Cardiac septum (tissue), 1 donor: ENCODE measurements at regions of chr19 and their contacts with region 1.

Region 1: DNA sequence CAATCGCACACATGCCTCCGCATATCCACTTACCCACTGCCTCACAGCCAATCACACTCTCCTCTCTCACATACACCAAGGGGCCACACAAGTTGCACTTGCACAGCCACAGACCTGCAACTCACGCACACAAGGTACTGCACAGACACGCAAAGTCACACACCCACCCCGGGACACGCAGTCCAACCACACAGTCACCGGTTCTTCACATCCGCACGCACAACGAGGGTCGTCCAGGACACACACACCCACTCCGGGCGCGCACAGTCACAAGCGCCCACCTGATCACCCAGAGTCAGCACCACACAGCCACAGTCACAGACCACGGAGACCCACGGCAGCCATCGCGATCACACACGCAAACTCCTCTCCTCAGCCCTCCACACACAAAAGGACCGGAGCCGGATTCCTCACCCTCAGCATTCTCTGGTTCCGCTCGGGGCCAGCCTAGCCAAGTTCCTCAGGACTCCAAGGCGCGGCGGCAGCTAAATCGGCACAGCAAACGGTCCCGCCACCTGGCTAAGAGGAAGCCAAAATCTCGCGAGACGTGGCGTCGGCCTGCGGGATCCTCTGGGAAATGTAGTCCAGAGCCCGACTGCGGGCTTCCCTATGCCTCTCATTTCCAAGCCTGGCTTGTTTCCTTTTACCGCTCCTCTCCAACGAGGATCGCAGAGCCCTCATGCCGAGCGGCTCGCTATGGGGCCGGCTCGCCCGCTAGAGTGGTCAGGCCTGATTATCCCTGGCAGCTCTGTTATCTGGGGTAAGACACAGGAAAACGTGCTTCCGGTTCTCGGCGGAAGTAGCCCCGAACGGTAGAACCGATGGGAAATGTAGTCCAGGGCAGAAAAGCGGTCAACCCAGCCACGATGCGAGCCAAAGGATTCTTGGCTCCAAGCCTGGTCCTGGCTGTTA is at the start of gene ZNF850:
- DNase-seq: peak; percentile 96
- total RNA-seq, gene ZNF850: 3.3 TPM

Region 2: GRCh38 chr19:36139473-36140303 is 632.9 kb before region 1 on chr19 and contains the start of gene CAPNS1:
- intact Hi-C with region 1: loop called (anchors 10 kb)
- DNase-seq: peak; percentile 99
- total RNA-seq, gene CAPNS1: 892 TPM

Region 3: DNA sequence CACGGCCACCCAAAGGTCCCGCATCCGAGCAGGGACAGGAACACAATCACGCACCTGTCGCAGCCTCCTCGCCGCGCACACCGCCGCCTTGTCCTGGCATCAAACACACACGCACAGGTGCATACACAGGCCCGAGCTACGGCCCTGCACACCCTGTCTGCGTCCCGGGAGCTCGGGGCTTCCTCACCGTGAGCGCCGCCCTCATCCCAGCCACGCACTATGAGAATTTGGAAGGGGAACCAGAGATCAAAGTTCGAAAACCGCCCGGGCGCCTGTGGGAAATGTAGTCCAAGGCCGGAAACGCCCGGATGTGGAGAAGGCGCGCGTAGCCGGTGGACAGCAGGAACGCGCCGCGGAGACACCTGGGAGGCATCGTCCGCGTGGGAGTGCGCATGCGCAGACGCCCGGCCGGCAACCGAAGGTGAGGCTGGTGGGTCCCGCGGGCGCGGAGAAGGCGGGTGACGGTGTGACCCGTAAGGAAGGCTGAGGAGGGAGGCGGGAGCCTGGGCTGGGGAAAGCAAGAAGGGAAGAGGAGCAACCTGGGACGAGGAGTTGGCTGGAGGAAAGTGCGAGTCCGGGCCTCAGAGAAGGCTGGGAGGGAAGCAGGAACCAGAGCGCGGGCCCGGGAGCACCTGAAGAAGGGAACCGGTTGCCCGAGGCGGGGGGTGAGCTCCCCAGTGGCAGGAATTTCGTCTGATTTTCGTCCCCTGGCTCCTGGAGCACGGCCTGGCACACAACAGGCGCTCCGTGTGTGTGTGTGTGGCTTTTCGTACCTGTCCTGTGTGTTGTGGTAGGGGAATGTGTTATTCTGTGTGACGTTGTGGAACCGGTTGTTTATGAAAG is 85.1 kb before region 1 on chr19 and contains the start of gene ZNF567:
- intact Hi-C with region 1: loop called (anchors 5 kb)
- DNase-seq: peak; percentile 98
- total RNA-seq, gene ZNF567: 3.0 TPM

Region 4: GRCh38 chr19:36796076-36796992 is 23.8 kb after region 1 on chr19:
- intact Hi-C with region 1: loop called (anchors 2 kb)
- DNase-seq: no peak

Region 5: GRCh38 chr19:36837906-36838783 is 65.6 kb after region 1 on chr19 and contains the start of gene ZNF790:
- intact Hi-C with region 1: loop called (anchors 5 kb)
- DNase-seq: peak; percentile 92
- total RNA-seq, gene ZNF790: 7.8 TPM

Region 6: DNA sequence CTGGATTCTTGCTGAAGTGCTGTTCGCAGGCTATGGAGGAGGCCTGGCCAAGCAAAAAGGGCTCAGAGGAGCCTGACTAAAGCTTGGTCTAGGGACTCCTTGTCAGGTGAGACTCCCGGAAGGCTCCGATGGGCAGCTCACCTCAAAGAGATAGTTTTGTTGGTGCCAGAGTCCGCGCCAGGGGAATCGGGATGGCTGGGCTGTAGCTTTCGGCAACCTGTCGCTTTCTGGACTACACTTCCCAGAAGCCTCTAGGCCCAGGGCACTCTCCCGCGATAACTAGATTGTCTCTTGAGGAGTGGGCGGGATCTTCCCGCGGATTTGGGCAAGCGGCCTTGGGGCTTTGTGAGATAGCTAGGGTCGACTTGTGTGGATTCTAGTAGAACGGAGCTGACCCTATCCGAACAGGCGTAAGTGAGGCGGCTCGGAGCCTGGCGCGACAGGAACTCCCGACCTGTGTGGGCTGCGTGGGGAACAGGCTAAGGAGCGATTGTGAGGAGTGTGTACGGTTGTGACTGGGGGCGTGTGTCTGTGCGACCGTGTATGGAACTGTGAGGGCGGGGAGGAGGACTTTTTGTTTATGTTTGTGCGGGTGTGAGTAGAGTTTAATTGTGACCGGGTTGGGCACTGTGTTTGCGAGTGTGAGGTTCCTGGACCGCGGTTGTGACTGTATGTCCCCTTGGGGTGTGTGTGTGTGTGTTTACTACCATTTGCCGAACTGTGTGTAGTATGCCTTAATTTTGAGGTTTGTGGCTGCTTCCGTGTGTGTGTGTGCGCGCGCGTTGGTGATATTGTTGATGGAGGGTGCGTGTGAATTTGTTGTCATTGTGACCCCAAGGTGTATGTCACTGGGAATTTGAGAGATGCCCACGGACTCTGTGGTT is 78.2 kb after region 1 on chr19 and contains the start of gene ZNF345:
- intact Hi-C with region 1: loop called (anchors 2 kb)
- DNase-seq: peak; percentile 94
- total RNA-seq, gene ZNF345: 2.7 TPM